ENCODE measurements at regions of chr3 and their contacts with region 1.

Region 1: GRCh38 chr3:113575206-113575605 is 42.9 kb downstream of the SIDT1 start:
- DNase-seq: no peak
- ATAC-seq: no peak
- H3K4me3 Mint-ChIP-seq: no peak overlapping the region
- H3K27ac Mint-ChIP-seq: no peak overlapping the region
- H3K4me1 Mint-ChIP-seq: peaks cover 4% of the 10 kb centered on the region
- H3K27me3 Mint-ChIP-seq: no peaks in the 10 kb centered on the region
- CTCF ChIP-seq: no peak

Region 2: GRCh38 chr3:113495035-113495434 is 80.2 kb before region 1 on chr3:
- CTCF ChIA-PET with region 1: interaction called, 93 read pairs
- POLR2A ChIA-PET with region 1: no interaction called
- intact Hi-C with region 1: loop called (anchors 2 kb)
- DNase-seq: peak; percentile 61
- ATAC-seq: peak; percentile 27
- H3K4me3 Mint-ChIP-seq: no peak overlapping the region
- H3K27ac Mint-ChIP-seq: no peak overlapping the region
- H3K4me1 Mint-ChIP-seq: peaks cover 4% of the 10 kb centered on the region
- H3K27me3 Mint-ChIP-seq: no peaks in the 10 kb centered on the region
- CTCF ChIP-seq: peak; percentile 27

Region 3: DNA sequence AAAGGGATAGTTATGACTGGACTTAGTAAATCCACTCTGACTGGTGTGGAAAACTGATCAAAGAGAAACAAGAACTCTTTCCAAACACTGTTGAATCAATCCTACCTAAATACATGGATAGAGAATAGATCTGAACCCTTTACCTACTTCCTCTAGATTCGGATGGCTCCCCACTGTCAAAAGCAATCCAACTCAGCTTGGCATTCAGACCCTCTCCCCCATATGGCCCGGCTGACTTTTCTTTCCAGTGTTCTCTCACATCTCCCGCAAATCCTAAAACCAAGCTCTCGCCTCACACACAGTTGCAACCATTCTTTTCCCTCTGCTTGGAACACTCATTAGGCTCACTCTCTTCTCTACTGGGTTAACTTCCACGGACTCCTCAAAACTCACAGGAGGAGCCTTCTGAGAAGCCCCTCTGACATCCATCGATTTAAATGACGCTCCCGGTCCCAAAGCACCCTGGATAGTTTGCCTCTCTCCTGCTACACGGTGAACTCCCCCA is 60.9 kb before region 1 on chr3:
- CTCF ChIA-PET with region 1: interaction called, 48 read pairs
- POLR2A ChIA-PET with region 1: no interaction called
- intact Hi-C with region 1: no loop called
- DNase-seq: no peak
- ATAC-seq: no peak
- H3K4me3 Mint-ChIP-seq: no peak overlapping the region
- H3K27ac Mint-ChIP-seq: no peak overlapping the region
- H3K4me1 Mint-ChIP-seq: peaks cover 18% of the 10 kb centered on the region
- H3K27me3 Mint-ChIP-seq: peaks cover 6% of the 10 kb centered on the region
- CTCF ChIP-seq: no peak

Region 4: DNA sequence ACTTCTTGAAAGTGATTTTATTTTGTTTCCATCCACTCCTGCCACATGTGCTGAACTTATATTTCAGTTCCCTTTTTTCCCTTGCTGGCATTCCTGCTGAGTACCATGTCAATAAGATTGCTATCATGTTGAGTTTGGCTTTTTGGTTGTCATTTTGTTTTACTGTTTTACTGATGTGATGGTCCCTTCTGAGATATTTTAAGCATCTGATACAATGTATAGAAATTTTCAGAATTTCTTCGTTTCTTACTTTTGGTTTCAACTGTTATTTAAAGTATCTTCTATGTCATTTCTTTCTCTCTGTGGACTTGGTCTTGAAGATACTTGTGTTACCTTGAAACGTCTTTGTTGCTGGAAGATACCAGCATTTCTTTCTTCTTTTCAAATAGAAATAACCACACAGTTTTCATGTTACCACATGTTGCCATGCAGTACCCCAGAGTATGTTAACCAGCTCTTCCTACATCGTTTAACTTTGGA is 28.8 kb before region 1 on chr3:
- CTCF ChIA-PET with region 1: interaction called, 10 read pairs
- POLR2A ChIA-PET with region 1: no interaction called
- intact Hi-C with region 1: no loop called
- DNase-seq: no peak
- ATAC-seq: peak; percentile 42
- H3K4me3 Mint-ChIP-seq: peak overlapping the region; percentile 62
- H3K27ac Mint-ChIP-seq: peak overlapping the region; percentile 82
- H3K4me1 Mint-ChIP-seq: peaks cover 47% of the 10 kb centered on the region
- H3K27me3 Mint-ChIP-seq: no peaks in the 10 kb centered on the region
- CTCF ChIP-seq: no peak

Region 5: DNA sequence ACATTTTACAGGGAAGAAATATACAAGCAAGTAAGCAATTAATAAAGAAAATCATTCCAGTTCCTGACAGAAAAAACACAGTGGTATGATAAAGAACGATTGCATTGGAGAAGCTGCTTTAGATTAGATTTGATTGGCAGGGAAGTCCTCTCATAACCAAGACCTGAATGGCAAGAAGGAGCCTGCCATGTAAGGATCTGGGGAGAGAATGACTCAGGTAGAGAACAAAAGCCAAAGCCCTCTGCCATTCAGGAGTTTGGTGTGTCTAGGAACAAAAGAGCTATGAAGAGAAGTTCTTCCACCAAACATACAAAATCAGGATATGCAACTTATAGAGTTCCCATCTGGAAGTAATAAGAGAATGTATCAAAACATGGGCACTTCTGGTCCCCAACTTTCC is 14.8 kb after region 1 on chr3:
- CTCF ChIA-PET with region 1: interaction called, 13 read pairs
- POLR2A ChIA-PET with region 1: no interaction called
- intact Hi-C with region 1: no loop called
- DNase-seq: no peak
- ATAC-seq: no peak
- H3K4me3 Mint-ChIP-seq: no peak overlapping the region
- H3K27ac Mint-ChIP-seq: no peak overlapping the region
- H3K4me1 Mint-ChIP-seq: peaks cover 9% of the 10 kb centered on the region
- H3K27me3 Mint-ChIP-seq: no peaks in the 10 kb centered on the region
- CTCF ChIP-seq: no peak